ENCODE measurements at regions of chr4 and their contacts with region 1.

Region 1: DNA sequence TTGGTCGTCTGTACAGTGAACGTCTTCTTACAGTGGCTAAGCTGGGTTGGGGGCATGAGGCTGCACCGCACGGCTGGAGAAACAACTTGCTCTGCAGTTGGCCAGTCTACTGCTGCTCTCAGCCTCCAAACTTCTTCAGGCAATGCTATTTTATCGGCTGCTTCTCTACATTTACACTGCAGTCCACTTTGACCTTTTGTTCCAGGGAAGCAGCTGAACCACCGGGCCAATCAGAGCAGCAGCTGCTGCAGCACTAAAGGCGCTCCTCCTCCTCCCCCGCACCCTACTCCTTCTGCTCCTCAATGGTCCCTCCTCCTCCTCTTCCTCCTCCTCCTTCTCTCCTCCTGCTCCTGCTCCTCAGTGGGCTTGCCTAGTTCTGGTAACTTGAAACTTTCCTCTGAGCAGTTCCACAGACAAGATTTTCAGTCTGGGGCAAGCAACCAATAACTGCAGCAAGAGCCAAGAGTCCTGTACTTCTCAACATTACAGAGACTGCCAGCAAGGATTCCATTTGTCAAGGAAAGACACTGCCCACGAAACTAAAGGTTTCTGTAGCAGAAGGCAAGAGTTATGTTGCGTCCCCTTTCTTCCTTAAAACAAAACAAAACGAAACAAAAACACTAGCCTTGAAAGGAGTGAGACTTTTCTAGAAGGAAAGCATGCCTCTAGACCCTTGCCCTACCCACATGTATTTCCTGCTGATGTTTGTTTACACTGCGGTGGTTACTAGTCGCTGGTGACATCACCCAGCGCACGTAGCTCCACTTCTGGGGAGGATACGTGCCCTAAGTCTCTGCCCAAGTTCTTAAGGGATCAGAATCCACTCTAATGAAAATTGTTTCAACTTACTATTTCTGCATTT is 125.7 kb upstream of the NAP1L5 start:
- DNase-seq: peak; percentile 78
- H3K4me3 Mint-ChIP-seq: peak overlapping the region; percentile 93
- H3K27ac Mint-ChIP-seq: peak overlapping the region; percentile 90
- H3K4me1 Mint-ChIP-seq: peaks cover 25% of the 10 kb centered on the region
- H3K27me3 Mint-ChIP-seq: no peaks in the 10 kb centered on the region

Region 2: GRCh38 chr4:88456757-88457306 is 366.5 kb before region 1 on chr4 and contains the start of gene HERC5:
- CTCF ChIA-PET with region 1: no interaction called
- intact Hi-C with region 1: loop called (anchors 1 kb)
- DNase-seq: peak; percentile 93
- H3K4me3 Mint-ChIP-seq: peak within 1 kb of the TSS; percentile 98
- H3K27ac Mint-ChIP-seq: peak within 1 kb of the TSS; percentile 97
- H3K4me1 Mint-ChIP-seq: peaks cover 5% of the 10 kb centered on the region
- H3K27me3 Mint-ChIP-seq: no peaks in the 10 kb centered on the region
- total RNA-seq, gene HERC5: 38.8 to 39.5 TPM

Region 3: GRCh38 chr4:88964450-88964849 is 141.2 kb after region 1 on chr4:
- CTCF ChIA-PET with region 1: no interaction called
- intact Hi-C with region 1: loop called (anchors 1 kb)
- DNase-seq: peak; percentile 18
- H3K4me3 Mint-ChIP-seq: no peak overlapping the region
- H3K27ac Mint-ChIP-seq: no peak overlapping the region
- H3K4me1 Mint-ChIP-seq: peaks cover 11% of the 10 kb centered on the region
- H3K27me3 Mint-ChIP-seq: no peaks in the 10 kb centered on the region

Region 4: DNA sequence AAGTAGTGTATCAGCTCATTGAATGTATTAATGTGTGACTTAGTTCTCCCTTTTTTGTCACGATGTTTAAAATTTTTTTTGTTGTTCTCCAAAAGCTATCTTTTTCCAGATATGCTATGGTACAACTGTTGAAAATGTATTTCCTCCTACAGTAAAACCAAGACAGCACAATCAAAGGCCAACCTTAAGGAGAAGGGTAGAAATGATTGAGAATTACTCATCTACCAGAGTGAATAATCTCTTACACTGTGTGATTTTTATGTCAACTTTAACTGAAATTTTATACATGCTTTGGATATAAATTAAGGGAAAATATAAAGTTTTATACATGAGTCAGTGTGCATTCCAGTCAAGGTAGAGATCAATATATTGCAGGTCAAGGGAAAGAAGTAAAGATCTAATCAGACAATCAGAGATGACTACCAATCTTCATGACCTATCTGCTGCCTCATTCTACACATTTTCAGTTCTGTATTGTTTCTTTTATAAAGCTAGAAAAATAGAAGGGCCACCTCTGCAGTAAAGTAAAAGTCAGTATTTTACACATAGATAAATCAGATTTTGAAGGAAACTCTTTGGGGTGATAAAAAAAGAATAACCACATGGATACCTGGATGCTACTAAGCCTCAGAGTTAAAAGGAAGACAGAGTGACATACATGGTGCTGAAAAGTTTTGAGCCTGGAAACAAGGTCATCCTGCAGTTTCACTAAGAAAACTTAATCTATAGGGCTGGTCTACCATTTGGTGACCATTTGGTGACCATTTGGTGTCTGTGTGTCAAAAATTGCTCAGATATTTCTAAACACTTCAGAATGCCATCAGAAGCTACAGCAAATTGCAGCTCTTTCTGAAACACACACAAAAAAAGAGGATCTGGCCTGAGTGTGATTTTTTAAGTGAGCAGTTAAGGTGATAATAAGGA is 232.1 kb after region 1 on chr4:
- CTCF ChIA-PET with region 1: interaction called, 4 read pairs
- intact Hi-C with region 1: loop called (anchors 1 kb)
- DNase-seq: no peak
- H3K4me3 Mint-ChIP-seq: no peak overlapping the region
- H3K27ac Mint-ChIP-seq: no peak overlapping the region
- H3K4me1 Mint-ChIP-seq: peaks cover 32% of the 10 kb centered on the region
- H3K27me3 Mint-ChIP-seq: peaks cover 7% of the 10 kb centered on the region

Region 5: GRCh38 chr4:89158884-89159503 is 335.7 kb after region 1 on chr4:
- CTCF ChIA-PET with region 1: no interaction called
- intact Hi-C with region 1: loop called (anchors 2 kb)
- DNase-seq: no peak
- H3K4me3 Mint-ChIP-seq: no peak overlapping the region
- H3K27ac Mint-ChIP-seq: no peak overlapping the region
- H3K4me1 Mint-ChIP-seq: no peaks in the 10 kb centered on the region
- H3K27me3 Mint-ChIP-seq: peaks cover 4% of the 10 kb centered on the region

Region 6: DNA sequence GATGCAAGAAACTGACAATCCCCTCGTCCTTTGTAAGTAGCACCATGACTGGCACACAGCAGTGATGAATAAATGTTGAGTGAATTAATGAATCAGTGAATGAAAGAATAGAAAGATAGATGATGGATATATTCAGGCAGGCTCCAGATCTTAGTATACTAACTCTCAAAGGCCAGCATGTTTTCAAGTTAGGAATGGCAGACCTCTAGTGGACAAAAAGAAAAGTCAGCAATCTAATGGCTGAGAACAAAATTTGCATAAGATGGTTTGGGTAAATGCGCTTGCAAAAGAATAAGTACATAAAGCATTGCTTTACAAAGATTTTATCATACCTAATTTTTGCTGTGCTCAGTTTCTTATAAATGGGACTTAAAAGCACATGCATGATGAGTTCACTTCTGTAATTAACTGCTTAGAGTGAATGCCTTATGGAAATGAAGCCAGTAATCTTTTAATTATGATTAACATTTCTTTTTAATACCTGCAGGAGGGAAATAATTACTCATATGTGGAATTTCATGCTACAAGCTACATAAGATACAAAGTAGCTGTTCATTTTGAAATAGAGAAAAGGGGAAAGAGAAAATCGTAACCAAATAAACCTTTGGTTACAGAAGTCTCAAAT is 611.2 kb after region 1 on chr4:
- CTCF ChIA-PET with region 1: no interaction called
- intact Hi-C with region 1: loop called (anchors 1 kb)
- DNase-seq: no peak
- H3K4me3 Mint-ChIP-seq: no peak overlapping the region
- H3K27ac Mint-ChIP-seq: no peak overlapping the region
- H3K4me1 Mint-ChIP-seq: peaks cover 14% of the 10 kb centered on the region
- H3K27me3 Mint-ChIP-seq: no peaks in the 10 kb centered on the region

Region 7: DNA sequence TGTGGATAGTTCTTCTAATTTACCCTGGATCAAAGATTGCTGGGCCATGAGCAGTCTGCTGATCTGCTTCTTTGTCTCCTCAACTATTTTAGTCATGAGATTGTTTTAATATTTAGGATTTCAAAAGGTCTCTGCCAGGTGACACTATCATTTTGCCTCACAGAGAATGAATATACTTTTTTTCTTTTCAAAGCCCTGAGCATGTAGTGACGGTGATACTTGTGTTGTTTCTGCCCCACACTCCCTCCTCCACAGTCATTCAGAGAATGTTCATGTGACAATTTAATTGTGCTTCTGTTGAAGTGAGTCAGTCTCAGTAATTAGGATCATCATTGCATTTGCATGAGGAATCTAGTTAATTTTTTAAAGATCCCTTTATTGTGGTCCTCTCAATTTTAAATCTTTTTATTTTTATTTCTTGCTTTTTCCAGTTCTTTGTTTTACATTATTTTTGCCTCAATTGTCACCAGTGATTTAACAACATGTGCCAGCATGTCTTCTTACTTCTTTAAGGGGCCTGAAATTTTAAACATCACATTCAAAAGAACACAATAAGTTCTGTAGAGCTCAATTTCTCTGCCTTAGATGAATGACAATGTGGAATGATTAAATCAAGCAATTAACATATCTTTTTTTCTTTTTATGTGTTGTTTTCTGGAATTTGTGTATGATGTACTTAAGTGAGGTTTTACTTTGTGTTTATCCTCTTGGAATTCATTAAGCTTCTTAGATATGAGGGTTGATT is 1083.7 kb after region 1 on chr4:
- CTCF ChIA-PET with region 1: no interaction called
- intact Hi-C with region 1: loop called (anchors 5 kb)
- DNase-seq: peak; percentile 8
- H3K4me3 Mint-ChIP-seq: no peak overlapping the region
- H3K27ac Mint-ChIP-seq: no peak overlapping the region
- H3K4me1 Mint-ChIP-seq: peaks cover 2% of the 10 kb centered on the region
- H3K27me3 Mint-ChIP-seq: no peaks in the 10 kb centered on the region